ENCODE measurements at regions of chr1 and their contacts with region 1.

Region 1: DNA sequence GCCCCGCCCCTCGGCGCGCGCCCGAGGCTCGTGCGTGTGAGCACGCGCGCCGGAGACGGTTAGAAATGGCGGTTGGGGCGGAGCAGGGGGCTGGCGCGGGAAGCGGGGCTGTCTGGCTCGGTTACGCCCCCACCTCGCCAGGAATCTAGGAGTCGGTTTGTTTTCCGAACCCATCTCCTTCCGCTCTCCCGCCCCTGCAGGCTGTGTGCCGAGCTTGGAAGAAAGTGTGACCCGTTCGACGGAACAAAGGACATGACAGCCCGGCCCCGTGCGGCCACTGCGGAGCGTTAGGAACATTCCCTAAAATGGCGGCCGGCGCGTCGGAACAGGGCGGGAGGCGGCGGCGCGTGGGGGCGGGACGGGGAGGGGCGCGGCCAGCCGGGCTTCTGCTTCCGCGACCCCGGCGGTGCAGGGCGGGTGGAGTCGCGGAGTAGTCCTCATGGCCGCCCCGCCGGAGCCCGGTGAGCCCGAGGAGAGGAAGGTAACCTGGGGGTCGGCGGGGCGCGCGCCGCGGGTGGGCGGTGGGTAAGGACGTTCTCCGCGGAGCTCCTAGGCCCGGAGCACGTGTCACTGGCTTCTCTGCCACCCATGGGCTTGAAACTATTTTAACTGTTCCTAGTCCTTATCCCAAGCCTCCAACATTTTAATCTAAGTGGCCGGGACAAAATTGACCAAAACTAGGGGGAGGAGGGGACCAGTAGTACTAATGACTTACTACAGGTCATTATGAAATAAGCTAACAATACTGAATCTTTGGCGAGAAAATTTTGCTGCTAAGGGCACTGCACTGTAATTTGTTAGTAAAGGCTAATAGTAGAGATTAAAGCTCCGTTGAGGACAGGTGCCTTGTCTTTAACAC is at the start of gene COX20:
- DNase-seq: peak; percentile 88
- ATAC-seq: peak; percentile 75
- H3K4me3 ChIP-seq: peak within 1 kb of the TSS; percentile 68
- H3K27ac ChIP-seq: peak within 1 kb of the TSS; percentile 97
- H3K4me1 ChIP-seq: peaks cover 5% of the 10 kb centered on the region
- H3K27me3 ChIP-seq: no peaks in the 10 kb centered on the region
- CTCF ChIP-seq: no peak
- POLR2A ChIP-seq: peak; percentile 86
- RAD21 ChIP-seq: no peak
- total RNA-seq, gene COX20: 13.3 and 26.9 TPM in 2 replicates

Region 2: DNA sequence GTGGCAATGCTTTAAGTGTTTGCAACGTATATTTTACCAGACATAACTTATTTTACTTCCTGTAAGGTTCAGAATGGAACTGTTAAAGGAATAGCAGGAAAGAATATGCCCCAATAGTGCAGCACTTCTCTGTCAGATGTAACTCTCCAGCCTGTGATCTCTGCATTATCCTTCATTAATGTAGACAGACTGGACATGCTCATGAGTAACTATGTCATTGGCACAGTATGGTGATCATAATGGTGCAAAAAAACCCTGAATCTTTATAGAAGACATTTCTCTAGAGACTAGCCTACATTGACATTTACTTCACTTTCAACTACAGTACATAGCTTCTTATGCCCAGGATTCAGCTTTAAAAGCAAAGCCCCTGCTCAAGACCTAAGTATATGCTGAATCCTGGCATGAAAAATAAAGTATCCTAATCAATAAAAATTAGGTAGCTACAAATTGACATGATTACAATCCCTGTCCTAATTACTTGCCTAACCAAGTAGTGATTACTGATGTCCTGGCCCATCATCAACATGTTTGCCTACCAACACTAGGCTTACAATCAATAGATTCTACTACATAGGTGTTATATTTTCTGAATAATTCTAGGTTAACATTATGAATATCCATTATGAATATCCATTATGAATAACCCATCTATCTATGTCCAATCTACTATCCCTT is 13.8 kb after region 1 on chr1:
- CTCF ChIA-PET with region 1: interaction called, 13 read pairs
- POLR2A ChIA-PET with region 1: interaction called, 5 read pairs
- dilution Hi-C with region 1: no loop called
- in situ Hi-C with region 1: no loop called
- intact Hi-C with region 1: no loop called
- DNase-seq: no peak
- ATAC-seq: no peak
- H3K4me3 ChIP-seq: no peak overlapping the region
- H3K27ac ChIP-seq: no peak overlapping the region
- H3K4me1 ChIP-seq: peaks cover under 1% of the 10 kb centered on the region; the same call in 1 of the 2 replicates
- H3K27me3 ChIP-seq: no peaks in the 10 kb centered on the region
- CTCF ChIP-seq: no peak
- POLR2A ChIP-seq: peak; percentile 27
- RAD21 ChIP-seq: no peak

Region 3: DNA sequence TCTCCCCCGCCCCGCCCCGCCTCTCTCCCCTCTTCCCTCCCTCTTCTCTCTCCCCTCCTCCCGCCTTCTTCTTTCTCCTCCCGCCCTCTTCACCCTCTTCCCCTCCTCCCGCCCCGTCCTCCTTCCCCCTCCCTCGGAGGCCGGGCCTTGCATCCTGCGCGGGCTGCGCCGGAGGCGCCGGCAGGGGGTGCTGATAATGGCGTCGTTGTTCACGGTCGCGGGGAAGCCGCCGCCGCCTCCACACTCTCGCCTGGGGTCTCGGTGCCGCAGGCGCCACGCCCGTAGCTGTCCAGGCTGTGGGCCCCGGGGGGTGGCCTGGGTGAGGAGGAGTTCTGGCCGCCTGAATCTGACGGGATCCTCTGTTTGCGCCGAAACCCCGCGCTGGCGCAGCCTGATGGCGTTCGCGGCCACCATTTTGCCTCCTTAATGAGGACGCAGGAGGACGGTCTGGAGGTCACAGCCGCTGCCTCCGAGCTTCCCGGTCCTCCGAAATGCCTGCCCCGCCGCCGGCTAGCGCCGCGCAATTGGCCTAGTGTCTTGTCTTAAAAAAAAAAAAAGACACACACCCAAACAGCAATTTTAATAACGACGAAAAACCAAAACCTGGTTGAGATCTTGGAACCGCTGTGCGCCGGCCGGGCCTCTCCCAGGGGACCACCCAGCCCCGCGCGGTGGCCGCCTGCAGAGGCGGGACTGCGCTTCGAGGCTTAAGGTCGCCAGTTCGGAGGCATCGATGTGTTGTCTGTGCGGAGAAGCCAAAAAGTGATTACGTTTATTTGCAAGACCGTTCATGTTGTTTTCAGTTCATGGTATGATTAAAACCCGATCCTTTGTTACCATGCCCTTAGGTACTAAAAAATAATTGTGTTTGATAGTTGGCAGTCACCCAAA is 135.4 kb after region 1 on chr1:
- CTCF ChIA-PET with region 1: interaction called, 6 read pairs
- POLR2A ChIA-PET with region 1: no interaction called
- dilution Hi-C with region 1: no loop called
- in situ Hi-C with region 1: no loop called
- intact Hi-C with region 1: loop called (anchors 1 kb)
- DNase-seq: peak; percentile 95
- ATAC-seq: peak; percentile 89
- H3K4me3 ChIP-seq: peak overlapping the region; percentile 63
- H3K27ac ChIP-seq: peak overlapping the region; percentile 98
- H3K4me1 ChIP-seq: peaks cover 7% of the 10 kb centered on the region
- H3K27me3 ChIP-seq: no peaks in the 10 kb centered on the region
- CTCF ChIP-seq: peak; percentile 65
- POLR2A ChIP-seq: peak; percentile 75
- RAD21 ChIP-seq: peak; percentile 43; the same call in 1 of the 2 replicates

Region 4: GRCh38 chr1:244989813-244990212 is 154.3 kb after region 1 on chr1:
- CTCF ChIA-PET with region 1: no interaction called
- POLR2A ChIA-PET with region 1: no interaction called
- dilution Hi-C with region 1: no loop called
- in situ Hi-C with region 1: no loop called
- intact Hi-C with region 1: no loop called
- DNase-seq: peak; percentile 69
- ATAC-seq: no peak
- H3K4me3 ChIP-seq: no peak overlapping the region
- H3K27ac ChIP-seq: no peak overlapping the region
- H3K4me1 ChIP-seq: peaks cover 5% of the 10 kb centered on the region; the same call in 1 of the 2 replicates
- H3K27me3 ChIP-seq: no peaks in the 10 kb centered on the region
- CTCF ChIP-seq: no peak
- POLR2A ChIP-seq: no peak
- RAD21 ChIP-seq: no peak

Measured in IMR-90 (cell line).